CD4-positive, alpha-beta memory T cell (primary cell): ENCODE measurements at regions of chr13 and their contacts with region 1.

Region 1: GRCh38 chr13:74090869-74091605 is 43.2 kb downstream of the KLF12 start:
- DNase-seq: peak in 4 of 5 donors; percentile 32 to 49 (median 38)
- H3K4me3 ChIP-seq: no peak overlapping the region
- H3K4me3 Mint-ChIP-seq: peak overlapping the region in 7 of 8 donors; percentile 18 to 86 (median 72)
- H3K27ac ChIP-seq: peak overlapping the region; percentile 8
- H3K27ac Mint-ChIP-seq: peak overlapping the region; percentile 61 to 91 (median 86)
- H3K4me1 ChIP-seq: peaks cover 85% of the 10 kb centered on the region
- H3K4me1 Mint-ChIP-seq: peaks cover 54 to 86% (median 65%) of the 10 kb centered on the region in 4 donors
- H3K27me3 ChIP-seq: no peaks in the 10 kb centered on the region
- H3K27me3 Mint-ChIP-seq: no peaks in the 10 kb centered on the region

Region 2: DNA sequence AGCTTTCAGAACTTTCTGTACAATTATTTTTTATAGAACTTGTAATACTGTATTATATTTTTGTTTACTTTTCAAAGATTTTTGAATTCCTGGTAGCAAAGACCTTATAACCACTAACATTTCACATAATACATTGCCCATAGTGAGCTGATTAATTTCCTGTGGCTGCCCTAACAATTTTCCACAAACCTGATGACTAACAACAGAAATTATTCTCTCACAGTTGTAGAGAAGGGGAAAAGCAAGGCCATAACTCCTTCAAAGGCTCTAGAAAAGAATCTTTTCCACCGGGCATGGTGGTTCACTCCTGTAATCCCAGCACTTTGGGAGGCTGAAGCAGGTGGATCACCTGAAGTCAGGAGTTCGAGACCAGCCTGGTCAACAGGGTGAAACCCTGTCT is 24.1 kb after region 1 on chr13:
- CTCF ChIA-PET with region 1: no interaction called
- POLR2A ChIA-PET with region 1: no interaction called
- intact Hi-C with region 1: loop called (anchors 2 kb)
- DNase-seq: no peak
- H3K4me3 ChIP-seq: no peak overlapping the region
- H3K4me3 Mint-ChIP-seq: peak overlapping the region in 3 of 8 donors; percentile 15 to 67 (median 26)
- H3K27ac ChIP-seq: no peak overlapping the region
- H3K27ac Mint-ChIP-seq: peak overlapping the region in 2 of 7 donors; percentile 6 to 33
- H3K4me1 ChIP-seq: peaks cover 65% of the 10 kb centered on the region
- H3K4me1 Mint-ChIP-seq: peaks cover 44 to 76% (median 64%) of the 10 kb centered on the region in 4 donors
- H3K27me3 ChIP-seq: no peaks in the 10 kb centered on the region
- H3K27me3 Mint-ChIP-seq: no peaks in the 10 kb centered on the region